Dendritic cell treated with granulocyte-macrophage colony-stimulating factor and Interleukin-4, amounts not matched to agents 40 ng/mL and 50 ng/mL, for 4 days (primary cell): ENCODE measurements at regions of chr7 and their contacts with region 1.

Region 1: GRCh38 chr7:148698397-148699023 is at the start of gene CUL1:
- H3K4me3 Mint-ChIP-seq: peak within 1 kb of the TSS; percentile 91
- H3K27ac Mint-ChIP-seq: peak within 1 kb of the TSS; percentile 82
- H3K4me1 Mint-ChIP-seq: peaks cover 45% of the 10 kb centered on the region
- H3K27me3 Mint-ChIP-seq: no peaks in the 10 kb centered on the region

Region 2: GRCh38 chr7:148472406-148472805 is 226.1 kb before region 1 on chr7:
- intact Hi-C with region 1: no loop called
- H3K4me3 Mint-ChIP-seq: no peak overlapping the region
- H3K27ac Mint-ChIP-seq: no peak overlapping the region
- H3K4me1 Mint-ChIP-seq: no peaks in the 10 kb centered on the region
- H3K27me3 Mint-ChIP-seq: peaks cover 6% of the 10 kb centered on the region

Region 3: GRCh38 chr7:148575640-148576411 is 122.7 kb before region 1 on chr7:
- intact Hi-C with region 1: loop called (anchors 5 kb)
- H3K4me3 Mint-ChIP-seq: no peak overlapping the region
- H3K27ac Mint-ChIP-seq: peak overlapping the region; percentile 53
- H3K4me1 Mint-ChIP-seq: peaks cover 16% of the 10 kb centered on the region
- H3K27me3 Mint-ChIP-seq: no peaks in the 10 kb centered on the region

Region 4: GRCh38 chr7:148664324-148664723 is 34.2 kb before region 1 on chr7:
- intact Hi-C with region 1: no loop called
- H3K4me3 Mint-ChIP-seq: no peak overlapping the region
- H3K27ac Mint-ChIP-seq: no peak overlapping the region
- H3K4me1 Mint-ChIP-seq: no peaks in the 10 kb centered on the region
- H3K27me3 Mint-ChIP-seq: no peaks in the 10 kb centered on the region

Region 5: GRCh38 chr7:148884299-148885022 is 186.0 kb after region 1 on chr7:
- intact Hi-C with region 1: loop called (anchors 10 kb)
- H3K4me3 Mint-ChIP-seq: peak overlapping the region; percentile 80
- H3K27ac Mint-ChIP-seq: peak overlapping the region; percentile 88
- H3K4me1 Mint-ChIP-seq: peaks cover 21% of the 10 kb centered on the region
- H3K27me3 Mint-ChIP-seq: no peaks in the 10 kb centered on the region